ENCODE measurements at regions of chr17 and their contacts with region 1.

Region 1: DNA sequence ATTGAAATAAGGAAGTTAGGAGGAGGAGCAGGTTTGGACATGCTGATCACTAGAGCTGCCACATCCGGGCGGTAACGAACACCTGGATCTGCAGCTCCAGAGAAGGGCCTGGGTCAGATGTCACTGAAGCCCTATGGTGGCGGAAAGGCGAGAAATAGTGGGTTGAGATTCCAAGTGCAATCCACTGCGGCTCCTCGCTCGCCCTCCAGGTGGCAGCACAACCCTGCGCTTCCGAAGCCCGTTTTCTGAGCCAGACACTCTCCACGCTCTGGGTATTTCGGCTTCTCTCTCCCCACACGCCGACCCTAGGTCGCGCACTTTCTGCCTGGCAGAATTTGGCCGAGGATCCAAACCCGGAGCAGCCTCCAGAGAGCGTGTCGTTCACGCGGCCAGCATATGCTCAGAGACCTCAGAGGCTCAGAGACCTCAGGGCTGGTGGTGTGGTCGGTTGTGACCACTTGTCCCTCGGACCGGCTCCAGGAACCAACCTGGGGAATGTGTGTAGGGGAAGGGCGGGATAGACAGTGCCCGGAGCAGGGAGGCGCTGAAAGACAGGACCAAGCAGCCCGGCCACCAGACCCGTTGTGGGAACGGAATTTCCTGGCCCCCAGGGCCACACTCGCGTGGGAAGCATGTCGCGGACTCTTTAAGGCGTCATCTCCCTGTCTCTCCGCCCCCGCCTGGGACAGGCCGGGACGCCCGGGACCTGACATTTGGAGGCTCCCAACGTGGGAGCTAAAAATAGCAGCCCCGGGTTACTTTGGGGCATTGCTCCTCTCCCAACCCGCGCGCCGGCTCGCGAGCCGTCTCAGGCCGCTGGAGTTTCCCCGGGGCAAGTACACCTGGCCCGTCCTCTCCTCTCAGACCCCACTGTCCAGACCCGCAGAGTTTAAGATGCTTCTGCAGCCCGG is 744 bp upstream of the SLC2A4 start:
- H3K4me3 ChIP-seq: peak overlapping the region; percentile 32
- H3K27ac ChIP-seq: no peak overlapping the region
- H3K4me1 ChIP-seq: peaks cover 9% of the 10 kb centered on the region
- CTCF ChIP-seq: peak; percentile 99

Region 2: GRCh38 chr17:6862822-6863221 is 418.0 kb before region 1 on chr17:
- CTCF ChIA-PET with region 1: no interaction called
- POLR2A ChIA-PET with region 1: no interaction called
- H3K4me3 ChIP-seq: no peak overlapping the region
- H3K27ac ChIP-seq: no peak overlapping the region
- H3K4me1 ChIP-seq: no peaks in the 10 kb centered on the region
- CTCF ChIP-seq: no peak

Region 3: GRCh38 chr17:7263083-7264078 is 17.4 kb before region 1 on chr17:
- CTCF ChIA-PET with region 1: interaction called, 18 read pairs
- POLR2A ChIA-PET with region 1: interaction called, 4 read pairs
- H3K4me3 ChIP-seq: peak overlapping the region; percentile 40
- H3K27ac ChIP-seq: peak overlapping the region; percentile 80
- H3K4me1 ChIP-seq: peaks cover 18% of the 10 kb centered on the region
- CTCF ChIP-seq: no peak

Region 4: DNA sequence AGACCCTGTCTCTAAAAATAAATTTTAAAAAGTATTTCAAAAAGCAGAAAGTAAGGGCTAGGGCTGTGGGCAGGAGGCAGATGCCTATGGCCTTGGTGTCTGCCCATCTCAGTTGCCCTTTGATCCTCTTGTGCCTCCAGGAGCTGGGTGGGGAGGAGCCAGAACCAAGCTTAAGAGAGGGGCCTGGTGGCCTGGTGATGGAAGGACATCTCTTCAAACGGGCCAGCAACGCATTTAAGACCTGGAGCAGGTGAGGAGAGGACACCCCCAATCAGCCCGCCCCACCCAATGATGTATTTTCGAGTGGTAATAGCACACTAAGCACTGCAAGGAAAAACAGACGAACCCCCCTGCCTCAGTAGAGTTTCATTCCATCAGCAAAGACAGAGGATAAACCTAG is 63.6 kb after region 1 on chr17:
- CTCF ChIA-PET with region 1: interaction called, 8 read pairs
- POLR2A ChIA-PET with region 1: interaction called, 14 read pairs
- H3K4me3 ChIP-seq: no peak overlapping the region
- H3K27ac ChIP-seq: no peak overlapping the region
- H3K4me1 ChIP-seq: no peaks in the 10 kb centered on the region
- CTCF ChIP-seq: no peak